ENCODE measurements at regions of chr22 and their contacts with region 1.

Region 1: GRCh38 chr22:19178656-19179496 is at the start of gene SLC25A1:
- DNase-seq: peak; percentile 84
- ATAC-seq: peak; percentile 75
- H3K4me3 Mint-ChIP-seq: peak within 1 kb of the TSS; percentile 85
- H3K27ac Mint-ChIP-seq: peak within 1 kb of the TSS; percentile 68
- H3K4me1 Mint-ChIP-seq: peaks cover 27% of the 10 kb centered on the region
- H3K27me3 Mint-ChIP-seq: no peaks in the 10 kb centered on the region
- CTCF ChIP-seq: no peak
- total RNA-seq, gene SLC25A1: 44.2 and 44.6 TPM in 2 replicates

Region 2: DNA sequence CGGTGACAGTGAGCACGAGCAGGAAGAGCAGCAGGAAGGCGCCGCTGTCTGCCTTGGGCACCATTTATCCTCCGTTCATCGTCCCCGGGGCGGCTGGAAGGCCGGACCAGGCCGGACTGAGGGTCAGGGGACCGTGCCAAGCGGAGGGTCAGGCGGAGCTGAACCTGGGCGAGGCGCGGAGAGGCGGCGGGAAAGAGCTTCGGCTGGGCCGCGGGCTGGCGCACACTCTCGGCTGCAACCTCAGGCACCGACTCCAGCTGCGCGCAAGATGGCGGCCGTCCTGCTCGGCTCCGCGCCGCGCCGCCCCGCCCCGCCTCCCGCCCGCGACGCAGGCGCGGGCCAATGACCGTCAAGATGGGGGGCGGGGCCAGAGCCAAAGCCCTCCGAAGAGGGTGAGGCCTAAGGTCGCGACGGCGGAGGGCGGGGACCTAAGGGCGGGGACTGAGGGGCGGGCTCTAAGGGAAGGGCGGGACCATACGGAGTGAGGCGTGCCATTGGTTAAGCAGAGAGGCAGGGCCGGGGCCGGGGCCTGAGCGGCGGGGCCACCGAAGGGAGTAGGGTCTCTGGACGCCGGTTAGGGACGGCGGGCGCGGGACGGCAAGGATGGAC is 56.6 kb before region 1 on chr22 and contains the start of gene DGCR2:
- CTCF ChIA-PET with region 1: no interaction called
- POLR2A ChIA-PET with region 1: interaction called, 12 read pairs
- intact Hi-C with region 1: loop called (anchors 1 kb)
- DNase-seq: peak; percentile 87
- ATAC-seq: peak; percentile 97
- H3K4me3 Mint-ChIP-seq: peak within 1 kb of the TSS; percentile 89
- H3K27ac Mint-ChIP-seq: peak within 1 kb of the TSS; percentile 74
- H3K4me1 Mint-ChIP-seq: peaks cover 50% of the 10 kb centered on the region
- H3K27me3 Mint-ChIP-seq: no peaks in the 10 kb centered on the region
- CTCF ChIP-seq: no peak
- total RNA-seq, gene DGCR2: 29.3 and 33.2 TPM in 2 replicates

Region 3: DNA sequence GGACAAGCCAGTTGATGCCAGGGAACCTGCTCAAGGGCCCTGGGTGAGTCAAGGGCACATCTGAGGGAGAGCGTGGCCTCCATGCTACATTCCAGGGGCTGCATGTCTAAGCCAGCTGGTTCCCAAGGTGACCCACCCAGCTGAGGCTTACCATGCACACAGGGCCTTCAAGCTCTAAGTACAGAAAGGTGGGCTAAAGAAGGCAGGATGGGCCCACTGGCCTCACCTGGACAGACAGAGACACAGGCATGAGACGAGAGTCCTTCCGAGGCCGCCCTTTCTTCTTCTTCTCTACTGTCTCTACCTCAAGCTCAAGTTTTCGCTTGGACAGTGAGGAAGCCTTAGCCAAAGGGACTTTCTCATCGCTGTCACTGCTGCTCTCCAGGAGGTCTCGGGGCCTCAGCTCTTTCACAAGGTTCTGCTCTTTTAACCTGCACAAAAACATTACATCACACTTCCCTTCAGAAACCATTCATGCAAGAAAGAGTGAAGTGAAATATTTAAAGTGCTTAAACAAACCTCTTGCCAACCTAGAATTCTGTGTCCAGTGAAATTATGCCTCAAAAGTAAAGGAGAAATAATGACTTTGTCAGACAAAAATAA is 182.7 kb after region 1 on chr22:
- CTCF ChIA-PET with region 1: interaction called, 4 read pairs
- POLR2A ChIA-PET with region 1: interaction called, 5 read pairs
- intact Hi-C with region 1: loop called (anchors 2 kb)
- DNase-seq: peak; percentile 41
- ATAC-seq: peak; percentile 90
- H3K4me3 Mint-ChIP-seq: peak overlapping the region; percentile 71
- H3K27ac Mint-ChIP-seq: peak overlapping the region; percentile 95
- H3K4me1 Mint-ChIP-seq: peaks cover 80% of the 10 kb centered on the region
- H3K27me3 Mint-ChIP-seq: no peaks in the 10 kb centered on the region
- CTCF ChIP-seq: no peak

Region 4: DNA sequence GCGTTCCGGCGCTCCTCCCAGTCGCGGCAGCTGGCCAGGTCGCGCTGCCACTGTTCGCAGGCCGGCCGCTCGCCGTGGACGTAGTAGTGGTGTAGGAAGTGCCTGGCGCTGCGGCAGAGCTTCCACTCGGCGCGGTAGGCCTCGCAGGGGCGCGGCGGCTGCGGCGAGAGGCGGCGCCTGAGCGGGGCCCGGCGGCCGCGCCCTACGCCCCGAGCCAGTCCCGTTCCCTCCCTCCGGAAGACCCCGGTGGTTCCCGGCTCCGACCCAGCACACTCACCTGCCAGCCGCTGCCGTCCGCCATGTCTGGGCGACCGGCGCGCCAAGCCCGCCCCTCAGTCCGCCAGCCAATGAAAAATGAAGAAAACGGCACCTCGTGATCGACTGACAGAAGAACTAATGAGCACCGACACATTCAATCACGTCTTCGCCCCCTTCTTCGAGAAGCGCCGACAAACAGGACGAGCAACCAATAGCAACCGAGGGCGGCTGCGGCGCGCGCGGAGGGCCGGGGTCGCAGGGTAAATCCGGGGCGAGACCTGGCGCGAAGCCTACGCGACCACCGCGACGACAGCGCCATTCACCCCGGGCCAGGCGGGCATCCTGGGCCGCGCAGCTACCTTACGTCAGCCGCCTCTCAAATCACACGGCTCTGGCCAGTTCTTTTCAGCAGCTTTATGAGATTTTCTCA is 268.7 kb after region 1 on chr22 and contains the start of gene C22orf39:
- CTCF ChIA-PET with region 1: no interaction called
- POLR2A ChIA-PET with region 1: no interaction called
- intact Hi-C with region 1: loop called (anchors 1 kb)
- DNase-seq: peak; percentile 78
- ATAC-seq: peak; percentile 85
- H3K4me3 Mint-ChIP-seq: peak within 1 kb of the TSS; percentile 95
- H3K27ac Mint-ChIP-seq: peak within 1 kb of the TSS; percentile 98
- H3K4me1 Mint-ChIP-seq: peaks cover 31% of the 10 kb centered on the region
- H3K27me3 Mint-ChIP-seq: no peaks in the 10 kb centered on the region
- CTCF ChIP-seq: no peak
- total RNA-seq, gene C22orf39: 35.7 and 43.0 TPM in 2 replicates

Region 5: DNA sequence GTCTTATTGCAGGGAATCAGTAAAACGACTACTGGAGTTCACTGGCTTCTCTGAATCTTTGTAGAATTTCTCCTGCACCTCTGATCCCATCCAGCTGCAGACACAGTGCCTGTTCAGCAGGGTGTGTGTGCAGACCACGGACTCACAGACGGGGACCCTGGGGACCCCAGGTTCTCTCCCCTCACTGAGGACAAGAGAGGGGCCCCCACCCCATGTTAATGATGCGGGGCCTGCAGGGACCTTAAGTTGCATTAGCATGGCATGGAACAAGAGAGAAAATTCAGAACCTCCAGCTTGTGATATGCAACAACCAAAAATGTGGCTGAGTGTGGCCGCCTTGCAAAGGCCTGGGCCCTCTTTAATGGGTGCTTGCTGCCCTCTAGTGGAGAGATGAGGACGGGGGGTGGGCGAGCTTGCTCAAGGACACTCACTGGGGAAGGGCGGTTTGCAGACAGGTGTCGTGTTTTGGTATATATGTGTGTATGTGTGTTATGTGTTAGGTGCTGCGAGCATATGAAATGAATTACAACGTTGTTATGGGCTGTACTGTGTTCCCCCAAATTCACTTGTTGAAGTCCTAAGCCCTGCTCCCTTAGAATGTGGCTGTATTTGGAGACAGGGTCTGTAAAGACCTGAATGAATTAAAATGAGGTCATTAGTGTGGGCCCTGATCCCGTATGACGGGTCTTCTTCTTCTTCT is 451.0 kb after region 1 on chr22:
- CTCF ChIA-PET with region 1: interaction called, 19 read pairs
- POLR2A ChIA-PET with region 1: interaction called, 7 read pairs
- intact Hi-C with region 1: loop called (anchors 1 kb)
- DNase-seq: peak; percentile 74
- ATAC-seq: peak; percentile 94
- H3K4me3 Mint-ChIP-seq: no peak overlapping the region
- H3K27ac Mint-ChIP-seq: no peak overlapping the region
- H3K4me1 Mint-ChIP-seq: no peaks in the 10 kb centered on the region
- H3K27me3 Mint-ChIP-seq: peaks cover 24% of the 10 kb centered on the region
- CTCF ChIP-seq: peak; percentile 78